ENCODE measurements at regions of chr3 and their contacts with region 1.

Region 1: GRCh38 chr3:8441969-8442559 is 59.6 kb upstream of the LMCD1 start:
- DNase-seq: no peak
- ATAC-seq: no peak
- H3K4me3 Mint-ChIP-seq: no peak overlapping the region
- H3K27ac Mint-ChIP-seq: no peak overlapping the region
- H3K4me1 Mint-ChIP-seq: no peaks in the 10 kb centered on the region
- H3K27me3 Mint-ChIP-seq: peaks cover 1% of the 10 kb centered on the region
- CTCF ChIP-seq: no peak

Region 2: DNA sequence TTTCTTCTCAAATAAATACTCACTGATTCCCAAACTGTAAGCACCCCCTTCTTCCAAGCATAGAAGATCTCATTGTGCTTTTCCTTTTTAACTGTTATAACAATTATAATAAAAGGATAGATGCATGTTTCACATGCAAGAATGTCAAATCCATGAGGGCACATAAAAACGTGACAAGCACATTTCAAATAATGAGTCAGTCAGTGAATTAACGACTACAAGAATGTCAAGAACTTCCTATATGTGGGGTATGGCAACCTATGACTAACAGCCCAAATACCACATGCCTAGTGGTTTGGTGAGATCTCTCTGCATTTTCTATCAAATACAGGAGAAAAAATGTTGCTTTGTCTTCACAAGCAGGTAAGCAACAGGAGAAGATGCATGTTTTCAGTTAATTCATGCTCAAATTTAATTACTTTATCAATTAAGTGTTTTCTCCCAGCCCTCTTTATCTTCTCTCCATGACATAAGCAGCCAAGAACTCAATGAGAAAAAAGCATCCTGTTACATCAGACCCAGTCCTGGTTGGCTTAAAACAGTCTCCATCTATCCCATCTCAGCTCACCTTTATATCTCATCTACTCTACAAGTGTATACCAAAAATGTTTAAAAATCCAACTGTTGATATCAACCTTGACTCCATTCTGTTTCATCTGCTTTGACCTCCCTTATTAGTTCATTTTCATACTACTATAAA is 122.0 kb before region 1 on chr3:
- CTCF ChIA-PET with region 1: no interaction called
- POLR2A ChIA-PET with region 1: no interaction called
- intact Hi-C with region 1: no loop called
- DNase-seq: no peak
- ATAC-seq: no peak
- H3K4me3 Mint-ChIP-seq: no peak overlapping the region
- H3K27ac Mint-ChIP-seq: no peak overlapping the region
- H3K4me1 Mint-ChIP-seq: no peaks in the 10 kb centered on the region
- H3K27me3 Mint-ChIP-seq: peaks cover 1% of the 10 kb centered on the region
- CTCF ChIP-seq: no peak

Region 3: GRCh38 chr3:8607234-8608040 is 165.4 kb after region 1 on chr3:
- CTCF ChIA-PET with region 1: no interaction called
- POLR2A ChIA-PET with region 1: no interaction called
- intact Hi-C with region 1: loop called (anchors 1 kb)
- DNase-seq: no peak
- ATAC-seq: no peak
- H3K4me3 Mint-ChIP-seq: no peak overlapping the region
- H3K27ac Mint-ChIP-seq: no peak overlapping the region
- H3K4me1 Mint-ChIP-seq: no peaks in the 10 kb centered on the region
- H3K27me3 Mint-ChIP-seq: peaks cover 5% of the 10 kb centered on the region
- CTCF ChIP-seq: no peak

Measured in activated B cell treated with CpG ODN at 0.5 μM for 24 hours (primary cell).